ENCODE measurements at regions of chr1 and their contacts with region 1.

Region 1: DNA sequence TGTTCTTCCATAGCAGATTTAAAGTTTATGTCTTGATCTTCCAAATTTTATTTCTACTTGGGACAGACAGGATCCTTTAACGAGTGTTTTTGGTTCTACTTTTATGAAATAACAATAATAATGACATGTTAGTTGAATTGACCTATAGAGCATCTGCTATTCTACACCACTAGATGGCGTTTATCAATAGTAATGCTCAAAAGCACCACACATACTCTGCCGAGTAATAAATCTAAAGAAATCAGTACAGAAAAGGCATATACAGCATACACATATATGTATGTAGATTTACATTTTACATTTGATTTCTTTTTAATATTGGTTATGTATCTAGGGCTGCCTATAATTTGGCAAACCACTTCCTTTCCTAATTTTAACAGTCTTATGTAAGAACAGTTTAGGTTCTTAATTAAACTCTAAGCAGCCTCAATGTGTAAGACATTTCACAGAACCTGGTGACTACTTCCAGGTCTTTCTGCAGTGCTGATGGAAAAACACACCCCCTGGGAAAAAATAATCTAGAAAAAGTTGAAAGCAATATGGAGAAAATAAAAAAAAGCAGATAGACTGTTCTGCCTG is 5.9 kb upstream of the SIPA1L2 start:
- DNase-seq: no peak
- H3K4me3 ChIP-seq: no peak overlapping the region
- H3K27ac ChIP-seq: no peak overlapping the region
- H3K4me1 ChIP-seq: no peaks in the 10 kb centered on the region
- H3K27me3 ChIP-seq: no peaks in the 10 kb centered on the region
- CTCF ChIP-seq: peak; percentile 41 to 91 (median 84)
- POLR2A ChIP-seq: no peak

Region 2: GRCh38 chr1:232795497-232796053 is 159.7 kb after region 1 on chr1:
- intact Hi-C with region 1: loop called (anchors 5 kb)
- DNase-seq: no peak
- H3K4me3 ChIP-seq: no peak overlapping the region
- H3K27ac ChIP-seq: no peak overlapping the region
- H3K4me1 ChIP-seq: no peaks in the 10 kb centered on the region
- H3K27me3 ChIP-seq: no peaks in the 10 kb centered on the region
- CTCF ChIP-seq: no peak
- POLR2A ChIP-seq: no peak